K562 (cell line): ENCODE measurements at regions of chr12 and their contacts with region 1.

Region 1: DNA sequence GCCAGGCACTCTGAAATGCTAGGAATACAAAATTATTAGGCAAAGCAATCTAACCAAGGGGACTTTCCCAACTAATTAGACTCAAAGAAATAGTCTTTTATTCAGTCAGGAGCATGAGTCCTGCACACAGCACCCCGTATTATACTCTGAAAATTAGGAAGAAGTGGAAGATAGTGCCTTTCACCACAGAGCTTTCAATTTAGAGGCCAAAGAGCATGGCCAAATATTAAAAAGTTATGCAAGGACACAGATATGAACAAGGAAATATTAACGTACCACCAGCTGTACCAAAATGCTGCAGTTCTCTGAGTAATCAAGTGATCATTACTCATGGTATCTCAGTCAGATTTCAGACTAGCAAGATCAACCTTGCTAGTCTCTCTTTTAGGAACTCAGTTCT is 22.6 kb upstream of the MDM2 start:
- DNase-seq: no peak
- ATAC-seq: no peak
- H3K4me3 ChIP-seq: no peak overlapping the region
- H3K27ac ChIP-seq: no peak overlapping the region
- H3K4me1 ChIP-seq: peaks cover 4% of the 10 kb centered on the region in 2 experiments; a peak in 4 of 5 replicates
- H3K27me3 ChIP-seq: no peaks in the 10 kb centered on the region
- CTCF ChIP-seq: no peak
- EP300 ChIP-seq: no peak
- POLR2A ChIP-seq: no peak
- RAD21 ChIP-seq: no peak

Region 2: DNA sequence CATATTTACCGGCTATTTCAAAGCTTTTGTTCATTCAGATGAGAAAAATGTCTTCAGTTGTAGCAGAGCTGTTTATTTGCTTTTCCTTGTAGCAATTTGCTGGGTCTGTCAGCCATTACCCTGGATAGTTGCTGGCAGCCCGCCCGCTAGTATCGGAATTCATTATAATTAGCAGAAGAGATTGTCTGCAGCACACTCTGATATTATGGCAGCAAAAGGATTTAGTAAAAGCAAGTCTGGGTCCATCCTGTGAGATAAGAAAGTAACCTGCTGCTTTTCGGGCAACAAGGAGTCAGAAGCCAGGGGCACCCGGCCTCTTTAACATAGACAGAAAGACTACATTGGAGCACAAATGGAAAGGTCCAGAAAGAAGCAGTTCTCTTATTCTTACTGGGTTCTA is 45.5 kb before region 1 on chr12:
- CTCF ChIA-PET with region 1: no interaction called
- POLR2A ChIA-PET with region 1: no interaction called
- in situ Hi-C with region 1: no loop called
- intact Hi-C with region 1: no loop called
- DNase-seq: no peak
- ATAC-seq: no peak
- H3K4me3 ChIP-seq: no peak overlapping the region
- H3K27ac ChIP-seq: no peak overlapping the region
- H3K4me1 ChIP-seq: no peaks in the 10 kb centered on the region
- H3K27me3 ChIP-seq: no peaks in the 10 kb centered on the region
- CTCF ChIP-seq: no peak
- EP300 ChIP-seq: no peak
- POLR2A ChIP-seq: no peak
- RAD21 ChIP-seq: no peak

Region 3: DNA sequence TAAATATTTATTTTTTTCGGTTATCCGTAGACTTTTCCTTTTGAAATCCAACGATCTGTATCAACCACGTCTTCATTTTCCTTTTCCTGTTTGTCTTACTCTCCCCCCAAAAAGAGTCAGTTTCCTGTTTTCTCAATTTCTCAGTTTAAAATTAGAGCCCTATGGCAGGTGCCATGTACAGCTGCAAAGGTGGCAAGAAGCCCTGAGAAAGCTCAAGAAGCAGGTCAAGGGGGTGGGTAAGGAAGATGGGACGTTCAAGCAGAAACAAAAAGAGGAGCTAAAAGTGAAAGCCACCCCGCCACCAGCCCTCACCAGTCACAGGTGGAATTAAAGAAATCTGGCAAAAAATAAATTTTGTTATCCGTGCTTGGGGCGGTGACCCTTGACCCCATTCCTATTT is 12.6 kb before region 1 on chr12:
- CTCF ChIA-PET with region 1: interaction called, 7 read pairs
- POLR2A ChIA-PET with region 1: interaction called, 10 read pairs
- in situ Hi-C with region 1: no loop called
- intact Hi-C with region 1: no loop called
- DNase-seq: no peak
- ATAC-seq: no peak
- H3K4me3 ChIP-seq: no peak overlapping the region
- H3K27ac ChIP-seq: no peak overlapping the region
- H3K4me1 ChIP-seq: peaks cover 5 to 13% of the 10 kb centered on the region in 2 experiments; a peak in 4 of 5 replicates
- H3K27me3 ChIP-seq: no peaks in the 10 kb centered on the region
- CTCF ChIP-seq: no peak
- EP300 ChIP-seq: no peak
- POLR2A ChIP-seq: no peak
- RAD21 ChIP-seq: no peak

Region 4: GRCh38 chr12:68831272-68831671 is 45.9 kb after region 1 on chr12:
- CTCF ChIA-PET with region 1: no interaction called
- POLR2A ChIA-PET with region 1: no interaction called
- in situ Hi-C with region 1: no loop called
- intact Hi-C with region 1: no loop called
- DNase-seq: no peak
- ATAC-seq: peak; percentile 55
- H3K4me3 ChIP-seq: no peak overlapping the region
- H3K27ac ChIP-seq: no peak overlapping the region
- H3K4me1 ChIP-seq: no peaks in the 10 kb centered on the region
- H3K27me3 ChIP-seq: no peaks in the 10 kb centered on the region
- CTCF ChIP-seq: no peak
- EP300 ChIP-seq: no peak
- POLR2A ChIP-seq: no peak
- RAD21 ChIP-seq: no peak

Region 5: GRCh38 chr12:68856510-68856909 is 71.2 kb after region 1 on chr12:
- CTCF ChIA-PET with region 1: no interaction called
- POLR2A ChIA-PET with region 1: no interaction called
- in situ Hi-C with region 1: no loop called
- intact Hi-C with region 1: no loop called
- DNase-seq: no peak
- ATAC-seq: no peak
- H3K4me3 ChIP-seq: no peak overlapping the region
- H3K27ac ChIP-seq: no peak overlapping the region
- H3K4me1 ChIP-seq: no peaks in the 10 kb centered on the region
- H3K27me3 ChIP-seq: peaks cover 13 to 19% of the 10 kb centered on the region in 2 experiments; a peak in 4 of 5 replicates
- CTCF ChIP-seq: no peak
- EP300 ChIP-seq: no peak
- POLR2A ChIP-seq: no peak
- RAD21 ChIP-seq: no peak